HepG2 (cell line): ENCODE measurements at regions of chr7 and their contacts with region 1.

Region 1: DNA sequence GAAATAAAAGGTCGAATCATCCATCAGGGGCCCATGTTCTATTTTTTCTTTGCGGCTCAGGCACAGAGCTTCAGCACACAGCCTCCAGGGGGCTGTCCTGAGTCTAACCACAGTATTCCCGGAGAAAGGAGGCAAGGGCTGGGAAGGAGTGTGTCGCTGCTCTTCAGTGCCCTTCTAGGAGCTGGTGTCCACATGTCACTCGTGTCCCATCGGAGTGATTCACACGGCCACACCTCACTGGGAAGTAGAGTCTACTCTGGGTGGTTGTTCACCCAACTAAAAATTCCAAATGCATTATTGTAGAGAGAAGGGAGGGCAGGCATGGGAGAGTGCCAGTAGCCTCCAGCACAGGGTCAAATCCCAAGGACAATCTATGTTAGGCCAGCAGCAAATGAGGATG is 114.8 kb upstream of the LANCL2 start:
- DNase-seq: peak; percentile 47
- ATAC-seq: peak; percentile 56
- H3K4me3 ChIP-seq: peak overlapping the region in 1 of 3 experiments; percentile 15; a peak in 1 of 6 replicates
- H3K27ac ChIP-seq: no peak overlapping the region
- H3K4me1 ChIP-seq: peaks cover 20% of the 10 kb centered on the region
- H3K27me3 ChIP-seq: peaks cover 0 to 15% of the 10 kb centered on the region in 2 experiments; a peak in 3 of 5 replicates
- CTCF ChIP-seq: peak; percentile 69
- EP300 ChIP-seq: no peak
- POLR2A ChIP-seq: no peak
- RAD21 ChIP-seq: no peak

Region 2: GRCh38 chr7:55206235-55207029 is 43.9 kb before region 1 on chr7:
- CTCF ChIA-PET with region 1: no interaction called
- POLR2A ChIA-PET with region 1: no interaction called
- in situ Hi-C with region 1: no loop called
- intact Hi-C with region 1: loop called (anchors 1 kb)
- DNase-seq: no peak
- ATAC-seq: no peak
- H3K4me3 ChIP-seq: no peak overlapping the region
- H3K27ac ChIP-seq: no peak overlapping the region
- H3K4me1 ChIP-seq: peaks cover 11% of the 10 kb centered on the region; the same call in 1 of the 2 replicates
- H3K27me3 ChIP-seq: no peaks in the 10 kb centered on the region
- CTCF ChIP-seq: no peak
- EP300 ChIP-seq: no peak
- POLR2A ChIP-seq: no peak
- RAD21 ChIP-seq: no peak

Region 3: GRCh38 chr7:55423277-55423711 is 173.0 kb after region 1 on chr7:
- CTCF ChIA-PET with region 1: no interaction called
- POLR2A ChIA-PET with region 1: no interaction called
- in situ Hi-C with region 1: no loop called
- intact Hi-C with region 1: no loop called
- DNase-seq: no peak
- ATAC-seq: peak; percentile 55; the same call in 2 of the 3 replicates
- H3K4me3 ChIP-seq: no peak overlapping the region
- H3K27ac ChIP-seq: no peak overlapping the region
- H3K4me1 ChIP-seq: peaks cover 20% of the 10 kb centered on the region
- H3K27me3 ChIP-seq: no peaks in the 10 kb centered on the region
- CTCF ChIP-seq: no peak
- EP300 ChIP-seq: no peak
- POLR2A ChIP-seq: no peak
- RAD21 ChIP-seq: no peak